CD4-positive, alpha-beta memory T cell (primary cell): ENCODE measurements at regions of chr3 and their contacts with region 1.

Region 1: GRCh38 chr3:138397983-138398382 is 36.4 kb upstream of the ESYT3 start:
- DNase-seq: no peak
- H3K4me3 ChIP-seq: no peak overlapping the region
- H3K4me3 Mint-ChIP-seq: no peak overlapping the region
- H3K27ac ChIP-seq: no peak overlapping the region
- H3K27ac Mint-ChIP-seq: no peak overlapping the region
- H3K4me1 ChIP-seq: no peaks in the 10 kb centered on the region
- H3K4me1 Mint-ChIP-seq: no peaks in the 10 kb centered on the region
- H3K27me3 ChIP-seq: no peaks in the 10 kb centered on the region
- H3K27me3 Mint-ChIP-seq: peaks cover 10 to 13% of the 10 kb centered on the region in 2 donors

Region 2: DNA sequence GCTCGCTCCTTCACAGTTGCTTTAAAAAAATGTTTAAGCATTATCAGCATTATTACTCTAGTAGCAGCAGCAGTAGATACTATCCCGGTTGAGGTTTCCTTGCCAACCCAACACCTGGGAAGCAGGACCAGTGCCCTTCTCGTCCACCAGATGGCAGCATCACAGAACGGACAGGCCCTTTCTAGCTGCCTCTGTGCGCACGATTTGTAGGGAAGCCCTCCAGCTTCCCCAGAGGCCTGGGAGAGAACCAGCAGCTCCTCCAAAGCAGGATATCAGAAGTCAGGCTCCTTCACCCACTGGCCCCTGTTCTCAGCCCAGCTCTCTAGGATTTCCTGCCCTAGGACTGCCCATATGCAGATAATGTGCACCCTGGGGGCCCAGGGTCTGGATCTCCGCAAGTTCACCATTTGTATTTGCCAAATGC is 19.6 kb after region 1 on chr3:
- CTCF ChIA-PET with region 1: interaction called, 13 read pairs
- POLR2A ChIA-PET with region 1: no interaction called
- intact Hi-C with region 1: no loop called
- DNase-seq: peak; percentile 38 to 52 (median 40)
- H3K4me3 ChIP-seq: no peak overlapping the region
- H3K4me3 Mint-ChIP-seq: no peak overlapping the region
- H3K27ac ChIP-seq: no peak overlapping the region
- H3K27ac Mint-ChIP-seq: no peak overlapping the region
- H3K4me1 ChIP-seq: no peaks in the 10 kb centered on the region
- H3K4me1 Mint-ChIP-seq: no peaks in the 10 kb centered on the region
- H3K27me3 ChIP-seq: no peaks in the 10 kb centered on the region
- H3K27me3 Mint-ChIP-seq: peaks cover 5 to 14% of the 10 kb centered on the region in 2 donors

Region 3: GRCh38 chr3:139016430-139017048 is 618.6 kb after region 1 on chr3:
- CTCF ChIA-PET with region 1: no interaction called
- POLR2A ChIA-PET with region 1: no interaction called
- intact Hi-C with region 1: no loop called
- DNase-seq: no peak
- H3K4me3 ChIP-seq: no peak overlapping the region
- H3K4me3 Mint-ChIP-seq: no peak overlapping the region
- H3K27ac ChIP-seq: no peak overlapping the region
- H3K27ac Mint-ChIP-seq: no peak overlapping the region
- H3K4me1 ChIP-seq: no peaks in the 10 kb centered on the region
- H3K4me1 Mint-ChIP-seq: no peaks in the 10 kb centered on the region
- H3K27me3 ChIP-seq: no peaks in the 10 kb centered on the region
- H3K27me3 Mint-ChIP-seq: peaks cover 5 to 8% of the 10 kb centered on the region in 2 donors